Cardiac septum (tissue), 1 donor: ENCODE measurements at regions of chr5 and their contacts with region 1.

Region 1: DNA sequence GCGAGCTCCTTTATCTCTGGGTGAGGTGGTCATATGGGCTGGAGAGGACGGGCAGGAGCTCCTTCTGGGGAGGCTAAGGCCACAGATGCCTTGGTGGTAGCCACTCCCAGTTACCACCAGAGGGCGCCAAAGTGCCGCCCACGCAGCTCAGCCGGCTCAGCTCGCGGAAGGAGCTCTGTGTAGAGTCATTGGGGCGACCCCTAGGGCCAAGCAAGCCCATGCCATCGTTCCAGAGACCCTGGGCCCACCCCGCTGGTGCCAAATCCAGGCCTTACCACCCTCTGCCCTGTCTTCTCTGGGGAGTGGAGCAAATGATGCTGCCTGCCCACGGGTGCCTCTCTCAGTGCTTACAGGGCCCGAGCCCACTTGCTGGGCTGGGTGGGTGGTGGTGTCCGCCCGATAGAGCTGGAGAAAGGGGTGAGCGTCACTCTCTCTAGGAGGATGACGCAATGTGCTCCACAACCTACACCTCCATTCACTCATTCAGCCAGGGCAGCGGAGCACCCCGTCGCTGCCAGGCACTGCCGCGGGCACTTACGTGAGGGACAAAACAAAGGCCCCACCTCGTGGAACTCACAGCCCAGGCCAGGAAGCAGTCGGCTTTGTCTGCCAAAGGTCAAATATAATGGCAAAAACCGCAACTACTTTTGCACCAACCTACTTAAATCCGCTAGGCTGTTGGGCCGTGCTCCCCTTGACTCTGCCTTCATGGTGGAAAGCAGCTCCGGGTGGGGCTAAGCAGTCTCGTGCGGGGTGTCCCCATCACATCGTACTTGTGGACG is 13.8 kb downstream of the TSPAN17 start:
- DNase-seq: peak; percentile 89

Region 2: GRCh38 chr5:176337913-176338312 is 323.1 kb before region 1 on chr5:
- intact Hi-C with region 1: no loop called
- DNase-seq: no peak

Region 3: GRCh38 chr5:176837707-176838115 is 176.7 kb after region 1 on chr5:
- intact Hi-C with region 1: loop called (anchors 10 kb)
- DNase-seq: peak; percentile 89

Region 4: GRCh38 chr5:176875783-176876505 is 214.9 kb after region 1 on chr5:
- intact Hi-C with region 1: no loop called
- DNase-seq: no peak

Region 5: GRCh38 chr5:176959051-176959450 is 298.0 kb after region 1 on chr5:
- intact Hi-C with region 1: loop called (anchors 2 kb)
- DNase-seq: no peak